Common myeloid progenitor, CD34-positive (primary cell): ENCODE measurements at regions of chr1 and their contacts with region 1.

Region 1: GRCh38 chr1:112674439-112674985 is at the start of gene MOV10:
- DNase-seq: peak; percentile 68 to 89 (median 85)
- H3K4me3 ChIP-seq: peak within 1 kb of the TSS; percentile 65 to 95 (median 88)
- H3K27ac ChIP-seq: peak within 1 kb of the TSS in 1 of 2 experiments; percentile 77
- H3K4me1 ChIP-seq: peaks cover 7 to 22% (median 18%) of the 10 kb centered on the region in 4 experiments
- H3K27me3 ChIP-seq: no peaks in the 10 kb centered on the region

Region 2: DNA sequence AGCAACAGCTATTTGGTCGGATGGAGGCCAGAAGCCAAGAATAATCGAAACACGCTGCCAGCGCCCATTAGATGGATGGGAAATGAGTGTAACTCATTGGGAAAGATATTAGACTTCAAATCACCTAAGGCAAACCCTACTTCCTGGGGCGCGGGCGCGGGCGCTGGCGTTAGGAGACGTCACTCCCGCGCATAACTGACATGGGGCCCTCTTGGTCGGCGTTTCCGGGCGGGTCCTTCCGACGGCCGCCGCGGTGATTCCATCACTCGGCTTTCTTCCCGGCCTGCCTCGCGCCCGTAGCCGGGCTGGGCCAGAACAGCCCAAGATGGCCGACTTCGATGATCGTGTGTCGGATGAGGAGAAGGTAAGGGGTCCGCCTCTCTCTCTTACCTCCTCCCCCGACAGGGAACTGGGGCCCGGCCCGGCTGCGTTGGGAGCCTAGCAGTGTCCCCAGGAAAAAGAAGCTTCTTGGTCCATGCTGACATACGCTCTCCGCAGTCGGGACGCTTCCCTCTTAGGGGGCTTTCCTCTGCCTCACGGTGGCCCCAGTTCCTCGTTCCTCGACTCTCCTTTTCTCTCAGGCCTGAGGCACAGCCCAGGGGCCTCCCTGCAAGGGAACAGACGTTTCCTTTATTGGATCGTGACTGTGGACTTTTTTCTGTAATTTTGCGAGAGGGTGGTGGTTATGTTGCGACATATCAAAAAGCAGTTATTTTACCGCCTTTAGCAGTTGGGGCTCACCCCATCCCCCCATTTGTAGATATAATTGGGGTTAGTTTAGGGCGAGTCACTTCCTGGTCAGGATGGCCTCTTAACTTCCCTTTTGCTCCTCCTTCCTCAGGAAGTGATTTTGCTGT is 54.8 kb before region 1 on chr1 and contains the start of gene CAPZA1:
- CTCF ChIA-PET with region 1: interaction called, 10 read pairs
- POLR2A ChIA-PET with region 1: interaction called, 8 read pairs
- DNase-seq: peak; percentile 93 to 96 (median 94)
- H3K4me3 ChIP-seq: peak within 1 kb of the TSS; percentile 81 to 100 (median 97)
- H3K27ac ChIP-seq: peak within 1 kb of the TSS; percentile 99 to 100
- H3K4me1 ChIP-seq: peaks cover 23 to 44% (median 29%) of the 10 kb centered on the region in 4 experiments
- H3K27me3 ChIP-seq: no peaks in the 10 kb centered on the region

Region 3: DNA sequence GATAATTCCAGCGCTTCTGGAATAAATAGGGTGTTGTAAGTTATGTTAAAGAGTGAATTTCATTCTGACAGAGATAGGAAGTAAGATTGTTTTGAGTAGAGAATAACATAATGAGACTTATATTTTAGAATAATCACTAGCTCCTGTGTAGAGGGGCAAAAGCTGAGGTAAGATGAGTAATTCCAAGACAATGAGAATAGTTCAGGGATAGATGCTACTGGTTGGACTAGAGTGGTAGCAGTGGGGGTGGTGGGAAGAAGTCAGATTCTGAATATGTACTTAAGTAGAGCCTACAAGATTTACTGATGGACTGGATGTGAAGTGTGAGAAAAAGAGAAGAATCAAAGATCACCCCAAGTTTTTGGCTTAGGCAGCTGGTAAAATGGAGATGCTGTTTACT is 23.3 kb before region 1 on chr1:
- CTCF ChIA-PET with region 1: interaction called, 22 read pairs
- POLR2A ChIA-PET with region 1: interaction called, 12 read pairs
- DNase-seq: no peak
- H3K4me3 ChIP-seq: no peak overlapping the region
- H3K27ac ChIP-seq: no peak overlapping the region
- H3K4me1 ChIP-seq: no peaks in the 10 kb centered on the region
- H3K27me3 ChIP-seq: no peaks in the 10 kb centered on the region

Region 4: DNA sequence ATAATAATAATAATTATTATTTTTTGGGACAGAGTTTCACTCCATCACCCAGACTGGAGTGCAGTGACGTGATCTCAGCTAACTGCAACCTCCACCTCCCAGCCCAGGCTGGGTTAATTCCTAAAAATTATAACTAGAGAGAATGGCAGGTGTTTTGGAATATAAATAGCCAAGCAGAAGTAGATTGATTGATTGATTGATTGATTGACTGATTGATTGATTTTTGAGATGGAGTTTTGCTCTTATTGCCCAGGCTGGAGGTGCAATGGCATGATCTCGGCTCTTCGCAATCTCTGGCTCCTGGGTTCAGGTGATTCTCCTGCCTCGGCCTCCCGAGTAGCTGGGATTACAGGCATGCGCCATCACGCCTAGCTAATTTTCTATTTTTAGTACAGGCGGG is 14.4 kb before region 1 on chr1:
- CTCF ChIA-PET with region 1: interaction called, 20 read pairs
- POLR2A ChIA-PET with region 1: interaction called, 4 read pairs
- DNase-seq: no peak
- H3K4me3 ChIP-seq: no peak overlapping the region
- H3K27ac ChIP-seq: no peak overlapping the region
- H3K4me1 ChIP-seq: no peaks in the 10 kb centered on the region
- H3K27me3 ChIP-seq: no peaks in the 10 kb centered on the region

Region 5: GRCh38 chr1:112700290-112701226 is 26.0 kb after region 1 on chr1:
- CTCF ChIA-PET with region 1: interaction called, 28 read pairs
- POLR2A ChIA-PET with region 1: interaction called, 6 read pairs
- DNase-seq: peak; percentile 92 to 96 (median 96)
- H3K4me3 ChIP-seq: peak overlapping the region in 5 of 7 experiments; percentile 13 to 53 (median 36)
- H3K27ac ChIP-seq: peak overlapping the region; percentile 61 to 88
- H3K4me1 ChIP-seq: peaks cover 11 to 55% (median 46%) of the 10 kb centered on the region in 4 experiments
- H3K27me3 ChIP-seq: no peaks in the 10 kb centered on the region

Region 6: DNA sequence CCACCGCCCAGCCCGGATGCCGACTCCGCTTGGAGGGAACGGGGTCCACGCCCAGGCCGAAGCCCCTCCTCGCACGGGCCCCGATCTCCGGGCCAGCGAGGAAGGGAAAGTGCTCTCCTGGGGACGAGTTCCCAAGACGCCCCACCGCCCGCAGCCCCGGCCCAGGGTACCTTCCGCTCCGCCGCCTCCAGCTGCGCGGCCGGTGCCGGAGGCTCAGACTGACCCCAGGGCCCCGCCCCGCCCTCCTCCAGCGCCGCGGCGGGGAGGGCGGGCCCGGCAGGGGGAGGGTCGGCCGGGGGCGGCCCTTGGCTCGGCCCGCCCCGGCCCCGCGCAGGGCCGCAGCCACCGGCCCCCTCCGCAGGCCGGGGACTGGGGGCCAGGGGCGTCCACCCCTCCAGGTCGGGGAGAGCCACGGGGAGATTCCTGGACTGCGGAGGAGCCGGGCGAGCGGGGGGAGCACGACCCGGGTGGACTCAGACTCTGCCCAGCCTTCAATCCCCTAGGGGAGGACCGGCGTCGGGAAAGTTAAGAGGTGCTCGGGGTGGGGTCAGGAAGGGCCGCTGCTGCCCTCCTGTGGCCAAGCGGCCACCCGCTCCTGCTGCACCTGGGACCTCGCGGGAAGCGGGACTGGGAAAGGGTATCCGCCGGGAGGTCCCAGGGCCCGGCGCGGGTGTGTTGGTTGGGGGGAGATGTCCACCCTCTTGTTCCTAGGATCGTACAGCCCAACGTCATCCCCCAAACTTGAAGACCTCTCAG is 32.6 kb after region 1 on chr1 and contains the start of gene RHOC:
- CTCF ChIA-PET with region 1: interaction called, 20 read pairs
- POLR2A ChIA-PET with region 1: interaction called, 6 read pairs
- DNase-seq: peak; percentile 56 to 75 (median 57)
- H3K4me3 ChIP-seq: peak within 1 kb of the TSS; percentile 54 to 86 (median 76)
- H3K27ac ChIP-seq: peak within 1 kb of the TSS in 1 of 2 experiments; percentile 76
- H3K4me1 ChIP-seq: peaks cover 6 to 42% (median 33%) of the 10 kb centered on the region in 4 experiments
- H3K27me3 ChIP-seq: peaks cover 0 to 4% (median 2%) of the 10 kb centered on the region in 5 experiments

Region 7: DNA sequence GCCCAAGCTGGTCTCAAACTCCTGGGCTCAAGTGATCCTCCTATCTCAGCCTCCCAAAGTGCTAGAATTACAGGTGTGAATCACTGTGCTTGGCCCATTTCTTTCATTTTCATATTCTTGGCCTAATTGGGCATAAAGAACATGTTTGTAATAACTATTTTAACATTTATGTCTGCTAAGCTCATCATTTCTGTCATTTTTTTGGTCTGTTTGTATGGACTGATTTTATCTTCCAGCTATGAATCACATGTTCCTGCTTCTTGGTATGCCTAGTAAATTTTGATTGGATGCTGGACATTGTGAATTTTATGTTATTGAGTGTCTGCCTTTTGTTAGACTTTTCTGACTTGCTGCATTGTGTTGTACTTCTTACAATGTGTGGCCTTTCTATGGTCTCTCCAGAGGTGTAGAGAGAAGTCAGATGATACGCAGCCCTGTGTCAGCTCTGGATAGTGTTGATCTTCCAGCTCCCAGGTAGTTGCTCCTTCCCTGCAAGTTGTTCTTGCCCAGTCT is 79.7 kb after region 1 on chr1:
- CTCF ChIA-PET with region 1: no interaction called
- POLR2A ChIA-PET with region 1: no interaction called
- DNase-seq: no peak
- H3K4me3 ChIP-seq: no peak overlapping the region
- H3K27ac ChIP-seq: no peak overlapping the region
- H3K4me1 ChIP-seq: no peaks in the 10 kb centered on the region
- H3K27me3 ChIP-seq: peaks cover 2 to 18% (median 8%) of the 10 kb centered on the region in 5 experiments